ENCODE measurements at regions of chr2 and their contacts with region 1.

Region 1: DNA sequence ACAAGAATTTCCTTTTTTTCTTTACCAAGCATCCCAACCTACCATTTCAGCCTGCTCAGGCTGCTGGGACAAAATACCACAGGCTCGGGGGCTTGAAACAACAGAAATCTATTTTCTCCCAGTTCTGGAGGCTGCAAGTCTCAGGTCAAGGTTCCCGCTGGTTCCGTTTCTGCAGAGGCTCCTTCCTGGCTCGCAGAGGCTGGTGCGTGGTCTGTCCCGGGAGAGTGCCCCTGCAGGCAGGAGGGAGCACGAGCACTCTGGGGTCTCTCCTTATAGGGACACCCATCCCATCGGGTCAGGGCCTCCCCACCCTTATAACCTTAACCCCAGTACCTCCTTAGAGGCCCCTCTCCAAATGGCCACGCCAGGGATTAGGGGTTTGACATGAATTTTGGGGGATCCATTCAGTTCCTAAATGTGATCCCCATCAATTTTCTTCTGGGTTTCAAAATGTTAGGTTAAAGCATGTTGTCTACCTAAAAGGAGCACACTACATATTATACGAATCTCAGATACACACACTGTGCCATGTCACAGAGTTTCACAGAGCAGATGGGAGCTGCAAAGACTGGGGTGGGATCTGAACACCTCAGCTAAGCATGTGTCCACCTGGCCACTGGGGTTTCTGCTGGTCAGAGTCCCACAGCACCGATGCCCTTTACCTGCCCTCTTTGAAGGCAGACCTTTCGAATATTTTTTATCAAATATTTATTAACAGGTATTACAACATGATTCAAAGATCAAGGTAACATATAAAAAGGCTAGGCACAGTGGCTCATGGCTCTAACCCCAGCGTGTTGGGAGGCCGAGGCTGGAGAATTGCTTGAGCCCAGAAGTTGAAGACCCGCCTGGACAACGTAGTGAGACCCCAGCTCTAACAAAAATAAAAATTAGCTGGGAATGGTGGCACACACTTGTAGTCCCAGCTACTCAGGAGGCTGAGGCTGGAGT is 17.6 kb upstream of the ADI1 start:
- DNase-seq: peak; percentile 51
- H3K4me3 ChIP-seq: peak overlapping the region in 2 of 3 experiments; percentile 21 to 51
- H3K27ac ChIP-seq: peak overlapping the region; percentile 90
- H3K4me1 ChIP-seq: peaks cover 19% of the 10 kb centered on the region
- H3K27me3 ChIP-seq: no peaks in the 10 kb centered on the region
- CTCF ChIP-seq: peak; percentile 57 to 63
- POLR2A ChIP-seq: no peak

Region 2: GRCh38 chr2:3254442-3254941 is 282.5 kb before region 1 on chr2:
- CTCF ChIA-PET with region 1: no interaction called
- POLR2A ChIA-PET with region 1: no interaction called
- dilution Hi-C with region 1: no loop called
- intact Hi-C with region 1: no loop called
- DNase-seq: no peak
- H3K4me3 ChIP-seq: no peak overlapping the region
- H3K27ac ChIP-seq: no peak overlapping the region
- H3K4me1 ChIP-seq: no peaks in the 10 kb centered on the region
- H3K27me3 ChIP-seq: no peaks in the 10 kb centered on the region
- CTCF ChIP-seq: no peak
- POLR2A ChIP-seq: no peak

Region 3: GRCh38 chr2:3265981-3266924 is 270.7 kb before region 1 on chr2:
- CTCF ChIA-PET with region 1: no interaction called
- POLR2A ChIA-PET with region 1: no interaction called
- dilution Hi-C with region 1: no loop called
- intact Hi-C with region 1: no loop called
- DNase-seq: no peak
- H3K4me3 ChIP-seq: no peak overlapping the region
- H3K27ac ChIP-seq: no peak overlapping the region
- H3K4me1 ChIP-seq: no peaks in the 10 kb centered on the region
- H3K27me3 ChIP-seq: no peaks in the 10 kb centered on the region
- CTCF ChIP-seq: no peak
- POLR2A ChIP-seq: no peak

Region 4: GRCh38 chr2:3423492-3424175 is 113.3 kb before region 1 on chr2:
- CTCF ChIA-PET with region 1: interaction called, 3 read pairs
- POLR2A ChIA-PET with region 1: no interaction called
- dilution Hi-C with region 1: no loop called
- intact Hi-C with region 1: loop called (anchors 1 kb)
- DNase-seq: peak; percentile 63
- H3K4me3 ChIP-seq: no peak overlapping the region
- H3K27ac ChIP-seq: no peak overlapping the region
- H3K4me1 ChIP-seq: no peaks in the 10 kb centered on the region
- H3K27me3 ChIP-seq: no peaks in the 10 kb centered on the region
- CTCF ChIP-seq: peak; percentile 91 to 99
- POLR2A ChIP-seq: no peak

Region 5: DNA sequence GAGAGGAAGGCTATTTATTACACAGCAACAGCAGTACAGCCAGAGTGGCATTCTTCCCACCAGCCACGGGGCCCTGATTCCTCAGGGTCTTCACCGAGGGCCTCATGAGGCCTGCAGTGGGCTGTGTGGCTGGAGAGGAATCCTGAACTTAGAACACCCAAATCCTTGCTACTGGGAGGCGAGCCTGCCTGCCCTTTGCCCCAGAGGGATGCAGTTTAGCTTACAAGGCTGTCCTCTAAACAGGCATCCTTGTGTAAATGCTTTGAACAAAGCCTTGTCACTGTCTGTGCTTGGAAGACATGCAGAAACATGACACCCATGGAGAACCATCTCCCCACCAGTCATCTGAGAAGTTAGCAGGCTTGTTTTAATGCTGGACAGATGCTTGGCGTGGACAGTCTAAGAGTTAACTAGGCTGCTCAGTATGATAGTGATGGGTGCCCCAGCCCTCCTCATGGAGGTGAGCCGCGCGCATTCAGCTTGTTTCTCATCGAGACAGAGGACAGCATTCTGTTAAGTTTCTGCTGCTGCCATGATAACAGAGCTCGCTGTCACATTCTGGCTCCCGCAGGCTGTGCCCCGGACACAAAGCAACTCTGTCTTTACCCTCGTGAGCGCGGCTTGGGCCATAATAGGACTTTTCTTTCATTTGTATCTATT is 60.5 kb before region 1 on chr2:
- CTCF ChIA-PET with region 1: no interaction called
- POLR2A ChIA-PET with region 1: no interaction called
- dilution Hi-C with region 1: no loop called
- intact Hi-C with region 1: loop called (anchors 5 kb)
- DNase-seq: no peak
- H3K4me3 ChIP-seq: no peak overlapping the region
- H3K27ac ChIP-seq: no peak overlapping the region
- H3K4me1 ChIP-seq: no peaks in the 10 kb centered on the region
- H3K27me3 ChIP-seq: no peaks in the 10 kb centered on the region
- CTCF ChIP-seq: no peak
- POLR2A ChIP-seq: no peak

Region 6: GRCh38 chr2:3518496-3519254 is 18.3 kb before region 1 on chr2:
- CTCF ChIA-PET with region 1: interaction called, 12 read pairs
- POLR2A ChIA-PET with region 1: interaction called, 3 read pairs
- dilution Hi-C with region 1: no loop called
- intact Hi-C with region 1: loop called (anchors 1 kb)
- DNase-seq: peak; percentile 100
- H3K4me3 ChIP-seq: peak overlapping the region; percentile 66 to 89 (median 89)
- H3K27ac ChIP-seq: peak overlapping the region; percentile 60
- H3K4me1 ChIP-seq: peaks cover 24% of the 10 kb centered on the region
- H3K27me3 ChIP-seq: no peaks in the 10 kb centered on the region
- CTCF ChIP-seq: no peak
- POLR2A ChIP-seq: peak; percentile 83

Region 7: GRCh38 chr2:3558205-3559014 is 21.5 kb after region 1 on chr2 and contains the start of gene RNASEH1:
- CTCF ChIA-PET with region 1: interaction called, 5 read pairs
- POLR2A ChIA-PET with region 1: no interaction called
- dilution Hi-C with region 1: no loop called
- intact Hi-C with region 1: loop called (anchors 1 kb)
- DNase-seq: peak; percentile 99
- H3K4me3 ChIP-seq: peak within 1 kb of the TSS; percentile 65 to 96 (median 90)
- H3K27ac ChIP-seq: peak within 1 kb of the TSS; percentile 80
- H3K4me1 ChIP-seq: peaks cover 15% of the 10 kb centered on the region
- H3K27me3 ChIP-seq: no peaks in the 10 kb centered on the region
- CTCF ChIP-seq: no peak
- POLR2A ChIP-seq: peak; percentile 90
- total RNA-seq, gene RNASEH1: 30.8 and 31.4 TPM in 2 replicates

Region 8: DNA sequence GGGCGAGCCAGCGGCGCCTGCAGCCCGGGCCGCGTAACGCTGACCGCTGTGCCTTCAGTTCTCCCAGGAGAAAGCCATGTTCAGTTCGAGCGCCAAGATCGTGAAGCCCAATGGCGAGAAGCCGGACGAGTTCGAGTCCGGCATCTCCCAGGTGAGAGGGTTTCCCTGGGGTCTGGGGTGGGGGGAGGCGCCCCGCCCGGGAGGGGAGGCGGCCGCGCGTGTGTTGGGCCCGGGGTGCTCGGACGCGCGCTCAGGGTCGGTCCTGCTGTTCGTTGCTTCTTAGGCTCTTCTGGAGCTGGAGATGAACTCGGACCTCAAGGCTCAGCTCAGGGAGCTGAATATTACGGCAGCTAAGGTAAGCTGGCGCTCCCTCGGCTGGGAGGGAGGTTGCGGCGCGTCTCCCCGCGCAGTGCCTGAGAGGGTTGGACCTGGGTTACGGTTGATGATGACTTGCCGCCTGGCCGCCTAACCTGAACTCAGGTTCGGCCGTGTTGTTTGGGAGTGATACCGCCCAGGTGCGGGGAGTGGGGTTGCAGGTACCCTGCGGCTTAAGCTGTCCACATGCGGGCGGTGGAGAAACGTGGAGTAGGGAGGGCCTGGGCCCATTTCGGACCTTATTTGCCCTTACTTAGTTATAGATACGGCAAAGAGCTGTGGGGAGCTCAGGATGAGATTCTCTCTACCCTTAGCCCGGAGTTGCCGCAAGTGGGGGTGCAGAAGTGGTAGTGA is 38.7 kb after region 1 on chr2:
- CTCF ChIA-PET with region 1: no interaction called
- POLR2A ChIA-PET with region 1: no interaction called
- dilution Hi-C with region 1: no loop called
- intact Hi-C with region 1: loop called (anchors 1 kb)
- DNase-seq: peak; percentile 27
- H3K4me3 ChIP-seq: peak overlapping the region; percentile 37 to 82 (median 73)
- H3K27ac ChIP-seq: peak overlapping the region; percentile 54
- H3K4me1 ChIP-seq: peaks cover 31% of the 10 kb centered on the region
- H3K27me3 ChIP-seq: no peaks in the 10 kb centered on the region
- CTCF ChIP-seq: no peak
- POLR2A ChIP-seq: no peak

Region 9: DNA sequence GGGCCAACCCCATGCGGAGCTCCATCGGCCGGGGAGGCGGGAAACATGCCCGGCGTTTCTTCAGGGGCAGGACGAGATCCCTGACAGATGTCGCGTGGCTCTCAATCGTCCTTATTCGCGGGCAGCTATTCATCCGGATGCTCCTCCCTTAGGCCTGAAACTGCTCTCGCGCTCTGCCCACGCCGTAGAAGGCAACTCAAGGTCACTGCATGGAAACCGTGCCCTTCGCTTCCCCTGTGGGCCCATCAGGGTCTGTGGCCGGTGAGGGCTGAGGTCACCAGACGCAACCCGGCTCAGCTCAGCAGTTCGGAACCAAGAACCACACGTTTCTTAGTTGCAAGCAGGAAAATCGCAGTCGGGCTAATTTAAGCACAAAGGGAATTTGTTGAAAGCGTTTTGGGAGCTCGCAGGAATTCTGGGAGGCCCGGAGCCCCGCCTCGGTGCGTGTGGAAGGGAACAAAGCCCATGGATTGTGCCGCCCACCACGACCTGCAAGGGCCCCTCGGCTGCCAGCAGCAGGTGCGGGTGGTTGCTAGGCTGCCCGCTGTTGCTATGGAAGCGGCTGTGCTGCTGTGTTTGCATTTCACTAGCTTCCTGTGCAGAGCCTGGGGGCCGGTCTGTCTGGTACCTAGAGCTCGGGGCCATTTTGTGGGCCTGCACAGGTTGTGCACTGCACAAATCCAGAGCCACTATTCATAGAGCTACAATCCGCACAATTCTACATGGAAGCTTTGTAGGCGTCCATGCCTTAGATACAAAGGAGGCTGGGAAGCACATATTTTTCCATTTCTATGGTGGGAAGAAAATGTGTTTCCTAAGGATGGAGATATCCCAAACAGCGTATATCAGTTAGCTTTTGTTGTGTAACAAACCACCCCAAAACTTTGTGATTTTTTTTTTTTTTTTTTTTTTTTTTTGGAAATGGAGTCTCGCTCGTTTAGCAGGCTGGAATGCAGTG is 115.0 kb after region 1 on chr2:
- CTCF ChIA-PET with region 1: interaction called, 3 read pairs
- POLR2A ChIA-PET with region 1: no interaction called
- dilution Hi-C with region 1: no loop called
- intact Hi-C with region 1: loop called (anchors 1 kb)
- DNase-seq: peak; percentile 19
- H3K4me3 ChIP-seq: peak overlapping the region in 1 of 3 experiments; percentile 8
- H3K27ac ChIP-seq: no peak overlapping the region
- H3K4me1 ChIP-seq: peaks cover 2% of the 10 kb centered on the region
- H3K27me3 ChIP-seq: no peaks in the 10 kb centered on the region
- CTCF ChIP-seq: no peak
- POLR2A ChIP-seq: no peak

Measured in endothelial cell of umbilical vein (primary cell).